GM12878 (cell line): ENCODE measurements at regions of chr20 and their contacts with region 1.

Region 1: GRCh38 chr20:266596-267562 is 9.4 kb downstream of the DEFB132 start:
- DNase-seq: peak; percentile 41
- ATAC-seq: peak; percentile 97
- H3K4me3 ChIP-seq: peak overlapping the region; percentile 65; the same call in 1 of the 2 replicates
- H3K27ac ChIP-seq: no peak overlapping the region
- H3K4me1 ChIP-seq: no peaks in the 10 kb centered on the region
- H3K27me3 ChIP-seq: no peaks in the 10 kb centered on the region
- CTCF ChIP-seq: peak; percentile 91 to 94 (median 94)
- EP300 ChIP-seq: no peak
- POLR2A ChIP-seq: peak; percentile 75
- RAD21 ChIP-seq: peak; percentile 82

Region 2: DNA sequence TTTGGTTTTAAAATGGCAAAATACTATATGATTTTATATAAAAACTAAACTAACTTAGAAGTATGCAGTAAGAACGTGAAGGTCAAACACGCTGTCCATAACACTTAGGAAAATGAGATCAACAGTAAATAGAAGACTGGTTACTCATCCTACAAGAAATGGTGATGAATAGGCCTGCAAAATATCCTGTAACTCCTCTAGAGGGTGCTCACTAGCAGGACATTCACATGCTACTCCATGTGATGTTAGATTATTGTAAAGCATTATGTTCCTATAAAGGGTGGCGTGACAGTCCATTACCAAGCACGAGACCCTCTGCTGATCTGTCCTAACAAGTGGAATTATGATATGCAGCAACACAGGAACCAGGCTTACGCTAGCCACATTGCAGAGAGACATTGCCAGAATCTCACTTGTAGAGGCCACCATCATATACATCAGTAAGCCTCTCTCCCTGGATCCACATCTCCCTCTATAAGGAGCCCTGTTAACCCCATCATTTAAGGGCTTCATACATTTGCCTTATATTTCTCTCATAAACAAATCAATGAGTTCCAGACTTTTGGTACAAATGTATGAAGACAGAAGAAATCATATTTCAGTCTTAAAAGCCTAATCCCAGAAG is 57.8 kb before region 1 on chr20:
- CTCF ChIA-PET with region 1: interaction called, 41 read pairs
- POLR2A ChIA-PET with region 1: interaction called, 4 read pairs
- RAD21 ChIA-PET with region 1: interaction called, 6 read pairs
- SMC1A ChIA-PET with region 1: interaction called, 10 read pairs
- in situ Hi-C with region 1: no loop called
- intact Hi-C with region 1: loop called (anchors 1 kb)
- DNase-seq: no peak
- ATAC-seq: peak; percentile 91
- H3K4me3 ChIP-seq: no peak overlapping the region
- H3K27ac ChIP-seq: no peak overlapping the region
- H3K4me1 ChIP-seq: no peaks in the 10 kb centered on the region
- H3K27me3 ChIP-seq: peaks cover 0 to 2% of the 10 kb centered on the region in 2 experiments; a peak in 1 of 4 replicates
- CTCF ChIP-seq: peak; percentile 50 to 70 (median 58); a peak in 5 of 6 replicates
- EP300 ChIP-seq: no peak
- POLR2A ChIP-seq: no peak
- RAD21 ChIP-seq: peak; percentile 82

Region 3: DNA sequence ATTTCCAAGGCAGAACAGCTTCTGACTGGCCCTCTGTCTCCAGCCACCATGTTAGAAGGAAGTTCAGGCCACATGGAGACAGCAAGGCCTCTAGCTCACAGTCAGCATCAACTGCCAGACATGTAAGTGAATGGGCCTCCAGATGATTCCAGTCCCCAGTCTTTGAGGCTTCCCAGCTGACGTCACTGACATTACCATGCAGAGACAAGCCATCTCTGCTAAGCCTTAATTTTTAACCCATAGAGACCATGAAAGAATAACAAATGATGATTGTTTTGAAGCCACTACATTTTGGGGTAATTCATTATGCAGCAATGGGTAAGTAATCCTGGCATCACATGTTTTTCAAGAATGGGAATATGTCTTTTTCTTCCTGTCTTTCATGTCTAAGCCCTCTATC is 51.1 kb before region 1 on chr20:
- CTCF ChIA-PET with region 1: interaction called, 41 read pairs
- POLR2A ChIA-PET with region 1: interaction called, 4 read pairs
- RAD21 ChIA-PET with region 1: interaction called, 4 read pairs
- SMC1A ChIA-PET with region 1: interaction called, 10 read pairs
- in situ Hi-C with region 1: no loop called
- intact Hi-C with region 1: no loop called
- DNase-seq: no peak
- ATAC-seq: no peak
- H3K4me3 ChIP-seq: no peak overlapping the region
- H3K27ac ChIP-seq: no peak overlapping the region
- H3K4me1 ChIP-seq: no peaks in the 10 kb centered on the region
- H3K27me3 ChIP-seq: no peaks in the 10 kb centered on the region
- CTCF ChIP-seq: no peak
- EP300 ChIP-seq: no peak
- POLR2A ChIP-seq: no peak
- RAD21 ChIP-seq: no peak

Region 4: DNA sequence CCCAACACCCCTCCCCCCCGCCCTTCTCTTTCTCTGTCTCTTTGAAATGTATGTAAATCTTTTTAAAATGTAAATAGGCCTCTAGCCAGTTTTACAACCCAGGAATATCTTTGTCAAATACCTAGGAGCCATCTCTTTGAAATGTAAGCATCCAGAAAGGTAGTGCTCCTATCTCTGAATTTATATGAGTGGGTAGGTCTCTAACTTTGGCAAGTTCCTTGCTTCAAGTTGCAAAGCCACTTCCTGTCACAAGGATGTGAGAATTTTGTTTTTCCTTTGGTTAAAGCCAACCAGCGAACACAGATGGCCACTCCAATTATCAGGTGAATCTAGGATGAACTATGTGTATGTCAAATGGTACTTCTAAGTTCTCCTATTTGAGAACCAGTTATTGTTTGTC is 15.5 kb before region 1 on chr20:
- CTCF ChIA-PET with region 1: interaction called, 25 read pairs
- POLR2A ChIA-PET with region 1: interaction called, 3 read pairs
- RAD21 ChIA-PET with region 1: interaction called, 3 read pairs
- SMC1A ChIA-PET with region 1: interaction called, 3 read pairs
- in situ Hi-C with region 1: no loop called
- intact Hi-C with region 1: no loop called
- DNase-seq: no peak
- ATAC-seq: no peak
- H3K4me3 ChIP-seq: no peak overlapping the region
- H3K27ac ChIP-seq: no peak overlapping the region
- H3K4me1 ChIP-seq: no peaks in the 10 kb centered on the region
- H3K27me3 ChIP-seq: no peaks in the 10 kb centered on the region; a peak in 1 of 4 replicates
- CTCF ChIP-seq: no peak
- EP300 ChIP-seq: no peak
- POLR2A ChIP-seq: no peak
- RAD21 ChIP-seq: no peak

Region 5: GRCh38 chr20:309841-310644 is 43.2 kb after region 1 on chr20:
- CTCF ChIA-PET with region 1: interaction called, 5 read pairs
- POLR2A ChIA-PET with region 1: no interaction called
- RAD21 ChIA-PET with region 1: interaction called, 12 read pairs
- SMC1A ChIA-PET with region 1: no interaction called
- in situ Hi-C with region 1: no loop called
- intact Hi-C with region 1: no loop called
- DNase-seq: no peak
- ATAC-seq: peak; percentile 100
- H3K4me3 ChIP-seq: peak overlapping the region; percentile 46
- H3K27ac ChIP-seq: no peak overlapping the region; the same call in 1 of the 2 replicates
- H3K4me1 ChIP-seq: peaks cover 4% of the 10 kb centered on the region; the same call in 1 of the 2 replicates
- H3K27me3 ChIP-seq: no peaks in the 10 kb centered on the region
- CTCF ChIP-seq: no peak
- EP300 ChIP-seq: no peak
- POLR2A ChIP-seq: no peak
- RAD21 ChIP-seq: no peak

Region 6: DNA sequence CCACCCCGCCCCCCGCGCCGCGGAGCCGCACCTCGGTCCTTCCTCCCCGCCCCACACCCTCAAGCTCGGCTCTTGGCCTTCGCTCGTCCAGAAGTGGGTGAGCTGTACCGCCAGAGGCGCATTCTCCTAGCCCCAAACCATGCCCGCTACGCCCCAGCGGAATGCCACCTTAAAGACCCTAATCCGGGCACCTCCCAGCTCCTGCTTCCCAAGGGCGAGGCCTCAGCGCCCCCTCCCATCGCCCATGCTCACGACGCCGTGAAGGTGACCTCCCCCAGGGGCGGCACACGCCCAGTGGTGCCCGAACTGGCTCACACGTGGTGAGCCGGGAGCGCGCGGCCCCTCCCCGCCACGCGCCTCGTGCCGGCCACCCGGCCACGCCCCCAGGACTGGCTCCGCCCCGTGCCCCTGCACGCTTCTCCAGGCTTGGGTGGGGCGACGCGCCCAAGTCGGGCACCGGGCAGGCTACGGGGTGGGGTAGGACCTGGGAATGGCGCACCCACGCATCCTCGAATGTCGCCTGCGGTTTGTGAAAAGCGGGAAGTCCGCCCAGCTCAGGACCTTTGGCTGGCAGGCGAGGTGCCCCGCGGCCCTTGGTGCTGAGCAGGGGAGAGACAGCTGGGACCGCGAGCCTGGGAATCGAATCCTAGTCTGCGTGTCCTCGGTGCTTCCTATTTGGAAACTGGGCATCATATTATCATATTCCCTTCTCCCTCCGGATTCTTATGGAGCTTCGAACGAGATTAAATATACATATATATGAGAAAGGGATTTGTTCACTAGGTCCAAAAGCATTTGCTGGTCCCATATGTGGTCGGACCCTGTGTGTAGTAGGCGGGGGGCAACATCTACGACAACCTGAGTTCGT is 57.5 kb after region 1 on chr20:
- CTCF ChIA-PET with region 1: interaction called, 59 read pairs
- POLR2A ChIA-PET with region 1: no interaction called
- RAD21 ChIA-PET with region 1: interaction called, 19 read pairs
- SMC1A ChIA-PET with region 1: interaction called, 28 read pairs
- in situ Hi-C with region 1: no loop called
- intact Hi-C with region 1: no loop called
- DNase-seq: no peak
- ATAC-seq: peak; percentile 83
- H3K4me3 ChIP-seq: peak overlapping the region; percentile 87
- H3K27ac ChIP-seq: peak overlapping the region; percentile 88
- H3K4me1 ChIP-seq: peaks cover 4% of the 10 kb centered on the region
- H3K27me3 ChIP-seq: no peaks in the 10 kb centered on the region
- CTCF ChIP-seq: peak; percentile 18 to 43 (median 30); a peak in 5 of 6 replicates
- EP300 ChIP-seq: no peak
- POLR2A ChIP-seq: peak; percentile 84
- RAD21 ChIP-seq: no peak